ENCODE measurements at regions of chr17 and their contacts with region 1.

Region 1: DNA sequence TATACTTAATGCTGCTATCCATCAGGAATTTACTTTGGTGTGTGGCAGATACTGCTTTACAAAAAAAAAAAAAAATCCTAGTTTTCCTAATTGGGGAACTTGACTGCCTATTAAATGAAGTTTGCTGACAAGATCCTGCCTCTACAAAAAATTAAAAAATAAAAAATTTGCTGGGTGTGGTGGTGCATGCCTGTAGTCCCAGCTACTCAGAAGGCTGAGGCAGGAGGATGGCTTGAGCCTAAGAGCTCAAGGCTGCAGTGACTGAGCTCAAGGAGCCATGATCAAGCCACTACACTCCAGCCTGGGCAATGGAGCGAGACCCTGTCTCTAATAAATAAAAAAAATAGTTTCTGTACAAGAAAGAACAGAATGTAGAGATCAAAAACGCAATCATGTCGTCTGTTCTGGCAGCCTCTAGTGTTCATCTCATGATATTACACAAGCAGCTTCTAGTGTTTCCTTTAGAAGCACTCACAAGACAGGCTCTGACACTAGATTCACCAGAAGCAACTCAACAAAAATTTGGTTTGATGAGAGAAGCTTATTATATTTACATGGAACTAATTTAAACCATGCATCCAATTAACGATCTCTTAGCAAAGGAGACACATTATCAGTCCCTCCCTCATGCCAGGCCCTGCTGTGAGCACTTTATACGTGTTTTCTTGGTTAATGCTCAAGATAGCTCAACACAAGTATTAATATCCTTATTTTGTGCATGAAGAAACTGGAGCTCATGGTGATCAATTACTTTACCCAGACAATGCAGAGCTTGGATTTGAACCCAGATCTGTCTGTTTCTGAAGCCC is 6.8 kb upstream of the KRTAP17-1 start:
- DNase-seq: no peak
- H3K4me3 ChIP-seq: no peak overlapping the region
- H3K27ac ChIP-seq: no peak overlapping the region
- H3K4me1 ChIP-seq: no peaks in the 10 kb centered on the region
- H3K27me3 ChIP-seq: no peaks in the 10 kb centered on the region
- CTCF ChIP-seq: peak; percentile 64 to 82 (median 68)
- EP300 ChIP-seq: no peak
- POLR2A ChIP-seq: no peak

Region 2: GRCh38 chr17:40803617-40804082 is 518.6 kb before region 1 on chr17:
- intact Hi-C with region 1: loop called (anchors 5 kb)
- DNase-seq: no peak
- H3K4me3 ChIP-seq: no peak overlapping the region
- H3K27ac ChIP-seq: no peak overlapping the region
- H3K4me1 ChIP-seq: no peaks in the 10 kb centered on the region
- H3K27me3 ChIP-seq: peaks cover 0 to 54% (median 0%) of the 10 kb centered on the region in 4 donors
- CTCF ChIP-seq: peak; percentile 84 to 85 (median 84)
- EP300 ChIP-seq: no peak
- POLR2A ChIP-seq: no peak

Region 3: GRCh38 chr17:41131979-41132378 is 190.3 kb before region 1 on chr17:
- intact Hi-C with region 1: no loop called
- DNase-seq: no peak
- H3K4me3 ChIP-seq: no peak overlapping the region
- H3K27ac ChIP-seq: no peak overlapping the region
- H3K4me1 ChIP-seq: no peaks in the 10 kb centered on the region
- H3K27me3 ChIP-seq: no peaks in the 10 kb centered on the region
- CTCF ChIP-seq: no peak
- EP300 ChIP-seq: no peak
- POLR2A ChIP-seq: no peak

Measured in esophagus muscularis mucosa (tissue), 4 donors.